Dorsolateral prefrontal cortex (tissue), 120 donors: ENCODE measurements at regions of chr1 and their contacts with region 1.

Region 1: GRCh38 chr1:204162231-204163074 is 3.7 kb downstream of the REN start:
- DNase-seq: peak; percentile 72 to 87 (median 80)
- H3K4me3 ChIP-seq: no peak overlapping the region
- H3K27ac ChIP-seq: no peak overlapping the region
- H3K27me3 ChIP-seq: no peaks in the 10 kb centered on the region
- CTCF ChIP-seq: peak; percentile 82 to 100 (median 98)

Region 2: DNA sequence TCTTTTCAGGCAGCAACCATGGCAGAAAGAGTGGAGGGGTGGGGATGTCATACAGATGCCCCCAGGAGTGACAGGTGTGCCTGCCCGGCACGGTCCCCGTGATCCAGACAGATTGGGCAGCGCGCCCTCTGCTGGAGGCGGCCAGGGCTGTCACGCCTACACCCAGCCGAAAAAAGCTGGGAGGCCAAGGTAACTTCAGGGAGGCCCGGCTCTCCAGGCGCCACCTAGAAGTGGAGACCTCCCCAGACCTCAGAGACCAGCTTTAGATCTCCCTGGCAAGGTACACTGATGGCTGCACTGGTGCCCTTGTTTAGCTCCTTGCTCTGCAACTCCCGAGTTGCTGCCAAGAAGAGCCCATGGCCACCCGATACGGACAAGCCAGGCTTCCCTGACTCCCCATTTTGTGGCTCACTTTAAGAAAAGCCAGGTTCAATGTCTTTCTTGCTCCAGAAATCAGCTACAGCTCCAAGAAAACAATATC is 44.7 kb after region 1 on chr1:
- intact Hi-C with region 1: loop called in 1 of 2 experiments (anchors 2 kb)
- DNase-seq: peak in 9 of 10 donors; percentile 60 to 80 (median 66)
- H3K4me3 ChIP-seq: peak overlapping the region in 6 of 59 donors; percentile 8 to 32 (median 14)
- H3K27ac ChIP-seq: peak overlapping the region in 20 of 59 donors; percentile 0 to 68 (median 30)
- H3K27me3 ChIP-seq: peaks cover 0 to 7% (median 0%) of the 10 kb centered on the region in 45 donors
- CTCF ChIP-seq: peak; percentile 61 to 94 (median 87)

Region 3: GRCh38 chr1:204323887-204324286 is 161.4 kb after region 1 on chr1:
- intact Hi-C with region 1: no loop called
- DNase-seq: no peak
- H3K4me3 ChIP-seq: no peak overlapping the region
- H3K27ac ChIP-seq: peak overlapping the region in 3 of 59 donors; percentile 3 to 14 (median 11)
- H3K27me3 ChIP-seq: no peaks in the 10 kb centered on the region
- CTCF ChIP-seq: no peak